Activated naive CD4-positive, alpha-beta T cell treated with anti-CD3 and anti-CD28 coated beads for 36 hours (primary cell): ENCODE measurements at regions of chr10 and their contacts with region 1.

Region 1: GRCh38 chr10:97407211-97407951 is 6.2 kb upstream of the RRP12 start:
- DNase-seq: peak; percentile 75
- H3K4me3 Mint-ChIP-seq: no peak overlapping the region
- H3K27ac Mint-ChIP-seq: peak overlapping the region; percentile 25
- H3K4me1 Mint-ChIP-seq: peaks cover 10% of the 10 kb centered on the region
- H3K27me3 Mint-ChIP-seq: no peaks in the 10 kb centered on the region

Region 2: DNA sequence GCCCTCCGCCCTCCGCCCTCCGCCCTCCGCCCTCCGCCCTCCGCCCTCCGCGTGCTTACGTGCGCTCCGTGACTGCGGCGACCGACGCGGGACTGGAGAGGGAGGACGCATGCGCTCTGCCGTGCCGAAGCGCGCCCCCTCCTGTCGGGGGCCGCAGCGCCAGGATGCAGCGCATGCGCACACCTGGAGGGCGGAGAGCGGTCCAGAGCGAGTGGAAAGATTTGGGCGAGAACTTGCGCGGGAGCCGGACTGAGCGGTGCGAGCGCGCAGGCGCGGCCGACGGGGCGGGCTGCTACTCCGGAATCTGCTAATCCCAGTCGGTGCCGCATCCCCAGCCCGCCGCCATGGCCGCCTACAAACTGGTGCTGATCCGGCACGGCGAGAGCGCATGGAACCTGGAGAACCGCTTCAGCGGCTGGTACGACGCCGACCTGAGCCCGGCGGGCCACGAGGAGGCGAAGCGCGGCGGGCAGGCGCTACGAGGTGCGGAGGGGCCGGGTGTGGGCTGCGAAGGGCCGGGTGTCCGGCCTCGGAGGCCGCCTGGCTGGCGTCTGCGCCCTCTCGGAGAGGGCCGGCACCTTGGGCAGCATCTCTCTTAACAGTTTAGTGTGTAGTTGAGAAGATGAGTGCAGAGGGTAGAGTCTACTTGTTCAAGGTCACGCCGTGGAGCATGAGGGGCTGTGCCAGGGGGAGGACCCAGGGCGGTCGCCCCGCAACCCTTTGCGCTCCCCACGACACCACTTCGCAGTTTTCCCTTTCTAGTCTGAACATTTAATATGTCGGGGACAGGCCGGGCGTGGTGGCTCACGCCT is 18.8 kb after region 1 on chr10 and contains the start of gene PGAM1:
- CTCF ChIA-PET with region 1: interaction called, 90 read pairs
- intact Hi-C with region 1: loop called (anchors 1 kb)
- DNase-seq: peak; percentile 95
- H3K4me3 Mint-ChIP-seq: peak within 1 kb of the TSS; percentile 90
- H3K27ac Mint-ChIP-seq: peak within 1 kb of the TSS; percentile 98
- H3K4me1 Mint-ChIP-seq: peaks cover 50% of the 10 kb centered on the region
- H3K27me3 Mint-ChIP-seq: no peaks in the 10 kb centered on the region
- total RNA-seq, gene PGAM1: 1,371 to 1,393 TPM

Region 3: GRCh38 chr10:97463363-97464132 is 56.2 kb after region 1 on chr10:
- CTCF ChIA-PET with region 1: interaction called, 8 read pairs
- intact Hi-C with region 1: loop called (anchors 1 kb)
- DNase-seq: peak; percentile 49
- H3K4me3 Mint-ChIP-seq: no peak overlapping the region
- H3K27ac Mint-ChIP-seq: peak overlapping the region; percentile 50
- H3K4me1 Mint-ChIP-seq: no peaks in the 10 kb centered on the region
- H3K27me3 Mint-ChIP-seq: no peaks in the 10 kb centered on the region

Region 4: DNA sequence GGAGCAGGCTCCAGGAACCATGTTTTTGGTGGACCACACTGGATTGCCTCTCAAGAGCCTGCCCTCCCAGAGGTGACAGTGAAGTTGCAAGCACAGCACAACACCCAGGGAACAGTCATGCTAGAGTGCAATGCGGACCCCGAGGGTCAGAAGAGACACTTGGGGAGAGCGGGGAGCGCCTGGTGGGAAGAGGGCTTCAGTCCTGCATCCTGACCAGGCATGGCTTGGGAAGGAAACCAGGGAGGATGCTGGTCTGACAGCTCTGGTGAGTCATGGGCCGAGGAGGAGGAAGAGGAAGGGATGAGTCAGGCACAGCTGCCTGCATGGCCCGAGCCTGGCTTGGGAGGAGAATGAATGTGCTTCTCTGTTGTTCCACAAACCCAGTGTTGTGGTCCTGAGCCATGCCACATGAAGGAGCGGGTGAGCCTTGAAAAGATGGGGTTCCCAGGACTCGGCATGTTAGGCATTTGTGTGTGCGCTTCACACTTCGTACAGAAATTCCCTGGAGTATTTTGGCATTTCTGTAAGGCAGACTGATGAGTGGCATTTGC is 135.7 kb after region 1 on chr10:
- CTCF ChIA-PET with region 1: no interaction called
- intact Hi-C with region 1: loop called (anchors 2 kb)
- DNase-seq: peak; percentile 86
- H3K4me3 Mint-ChIP-seq: no peak overlapping the region
- H3K27ac Mint-ChIP-seq: peak overlapping the region; percentile 68
- H3K4me1 Mint-ChIP-seq: peaks cover 23% of the 10 kb centered on the region
- H3K27me3 Mint-ChIP-seq: no peaks in the 10 kb centered on the region